T-cell (primary cell): ENCODE measurements at regions of chr13 and their contacts with region 1.

Region 1: DNA sequence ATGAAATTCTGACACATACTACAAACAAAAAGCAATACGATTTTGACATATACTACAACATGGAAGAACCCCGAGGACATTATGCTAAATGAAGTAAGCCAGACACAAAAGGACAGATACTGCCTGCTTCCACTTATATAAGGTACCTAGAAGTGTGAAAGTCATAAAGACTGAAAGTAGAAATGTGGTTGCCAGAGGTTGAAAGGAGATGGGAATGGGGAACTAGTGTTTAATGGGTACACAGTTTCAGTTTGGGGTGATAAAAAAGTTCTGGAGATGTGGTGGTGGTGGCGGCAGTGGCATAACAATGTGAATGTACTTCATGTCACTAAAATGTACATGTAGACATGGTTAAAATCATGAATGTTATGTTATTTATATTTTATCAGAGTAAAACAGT is 12.1 kb upstream of the NDFIP2 start:
- DNase-seq: no peak
- ATAC-seq: no peak
- H3K4me3 ChIP-seq: no peak overlapping the region
- H3K4me3 Mint-ChIP-seq: no peak overlapping the region
- H3K27ac ChIP-seq: no peak overlapping the region
- H3K27ac Mint-ChIP-seq: no peak overlapping the region
- H3K4me1 ChIP-seq: no peaks in the 10 kb centered on the region
- H3K4me1 Mint-ChIP-seq: no peaks in the 10 kb centered on the region
- H3K27me3 ChIP-seq: no peaks in the 10 kb centered on the region
- H3K27me3 Mint-ChIP-seq: peaks cover 0 to 2% of the 10 kb centered on the region in 2 donors

Region 2: GRCh38 chr13:77740931-77741596 is 1727.8 kb before region 1 on chr13:
- CTCF ChIA-PET with region 1: no interaction called
- POLR2A ChIA-PET with region 1: interaction called in 1 of 2 experiments, 11 read pairs
- DNase-seq: peak in 6 of 35 experiments; percentile 4 to 35 (median 10)
- ATAC-seq: no peak
- H3K4me3 ChIP-seq: no peak overlapping the region
- H3K4me3 Mint-ChIP-seq: no peak overlapping the region
- H3K27ac ChIP-seq: no peak overlapping the region
- H3K27ac Mint-ChIP-seq: no peak overlapping the region
- H3K4me1 ChIP-seq: no peaks in the 10 kb centered on the region
- H3K4me1 Mint-ChIP-seq: peaks cover 17 to 20% (median 18%) of the 10 kb centered on the region in 3 donors
- H3K27me3 ChIP-seq: no peaks in the 10 kb centered on the region
- H3K27me3 Mint-ChIP-seq: no peaks in the 10 kb centered on the region

Region 3: GRCh38 chr13:80577926-80578670 is 1109.3 kb after region 1 on chr13:
- CTCF ChIA-PET with region 1: no interaction called
- POLR2A ChIA-PET with region 1: no interaction called
- DNase-seq: no peak
- ATAC-seq: no peak
- H3K4me3 ChIP-seq: no peak overlapping the region
- H3K4me3 Mint-ChIP-seq: no peak overlapping the region
- H3K27ac ChIP-seq: no peak overlapping the region
- H3K27ac Mint-ChIP-seq: no peak overlapping the region
- H3K4me1 ChIP-seq: no peaks in the 10 kb centered on the region
- H3K4me1 Mint-ChIP-seq: no peaks in the 10 kb centered on the region
- H3K27me3 ChIP-seq: no peaks in the 10 kb centered on the region
- H3K27me3 Mint-ChIP-seq: no peaks in the 10 kb centered on the region